Vagina (tissue), 2 donors: ENCODE measurements at regions of chr4 and their contacts with region 1.

Region 1: GRCh38 chr4:10530137-10530786 is 73.0 kb upstream of the ZNF518B start:
- DNase-seq: no peak
- H3K4me3 ChIP-seq: no peak overlapping the region
- H3K27ac ChIP-seq: no peak overlapping the region
- H3K4me1 ChIP-seq: peaks cover 25% of the 10 kb centered on the region
- H3K27me3 ChIP-seq: no peaks in the 10 kb centered on the region
- CTCF ChIP-seq: no peak
- POLR2A ChIP-seq: no peak

Region 2: GRCh38 chr4:10457255-10457801 is 72.9 kb before region 1 on chr4 and contains the start of gene ZNF518B:
- intact Hi-C with region 1: loop called (anchors 10 kb)
- DNase-seq: no peak
- H3K4me3 ChIP-seq: peak within 1 kb of the TSS; percentile 48 to 84
- H3K27ac ChIP-seq: peak within 1 kb of the TSS; percentile 49
- H3K4me1 ChIP-seq: peaks cover 18% of the 10 kb centered on the region
- H3K27me3 ChIP-seq: no peaks in the 10 kb centered on the region
- CTCF ChIP-seq: no peak
- POLR2A ChIP-seq: peak in 1 of 2 donors; percentile 10
- total RNA-seq, gene ZNF518B: 38.3 TPM

Region 3: DNA sequence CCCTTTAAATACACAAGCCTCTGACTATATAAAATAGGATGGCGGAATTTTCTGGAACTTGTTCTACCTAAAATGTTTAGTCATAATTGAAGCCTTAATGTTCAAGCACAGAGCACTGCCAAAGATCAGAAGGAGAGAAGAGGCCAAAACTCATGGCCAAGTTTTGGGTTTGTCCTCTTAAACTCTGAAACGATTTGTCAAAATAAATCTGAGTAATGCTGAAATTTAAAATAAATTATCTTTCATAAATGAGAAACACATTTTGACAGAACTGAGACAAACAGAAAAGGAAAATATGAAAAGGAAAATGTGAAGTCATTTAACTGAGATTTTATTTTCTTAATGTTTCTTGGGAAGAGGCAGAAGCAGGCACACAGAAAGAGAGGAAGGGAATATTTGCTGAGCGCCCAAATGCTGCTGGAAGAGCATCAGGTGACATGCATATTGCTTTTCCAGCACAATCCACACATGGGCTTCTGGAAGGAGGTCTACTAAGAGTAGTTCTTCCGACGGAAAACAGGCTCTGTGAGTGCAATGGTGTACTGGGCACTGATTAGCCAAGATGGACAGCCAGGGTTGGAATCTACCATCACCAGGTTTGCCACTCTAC is 25.6 kb before region 1 on chr4:
- intact Hi-C with region 1: loop called (anchors 2 kb)
- DNase-seq: no peak
- H3K4me3 ChIP-seq: no peak overlapping the region
- H3K27ac ChIP-seq: no peak overlapping the region
- H3K4me1 ChIP-seq: no peaks in the 10 kb centered on the region
- H3K27me3 ChIP-seq: no peaks in the 10 kb centered on the region
- CTCF ChIP-seq: no peak
- POLR2A ChIP-seq: no peak

Region 4: GRCh38 chr4:10622728-10623127 is 92.5 kb after region 1 on chr4:
- intact Hi-C with region 1: no loop called
- DNase-seq: no peak
- H3K4me3 ChIP-seq: no peak overlapping the region
- H3K27ac ChIP-seq: no peak overlapping the region
- H3K4me1 ChIP-seq: no peaks in the 10 kb centered on the region
- H3K27me3 ChIP-seq: no peaks in the 10 kb centered on the region
- CTCF ChIP-seq: no peak
- POLR2A ChIP-seq: no peak

Region 5: GRCh38 chr4:10647846-10648245 is 117.6 kb after region 1 on chr4:
- intact Hi-C with region 1: no loop called
- DNase-seq: no peak
- H3K4me3 ChIP-seq: no peak overlapping the region
- H3K27ac ChIP-seq: no peak overlapping the region
- H3K4me1 ChIP-seq: no peaks in the 10 kb centered on the region
- H3K27me3 ChIP-seq: no peaks in the 10 kb centered on the region
- CTCF ChIP-seq: no peak
- POLR2A ChIP-seq: no peak